MCF 10A (cell line): ENCODE measurements at regions of chr3 and their contacts with region 1.

Region 1: GRCh38 chr3:72887705-72888545 is at the start of gene GXYLT2:
- DNase-seq: peak; percentile 63
- H3K4me3 Mint-ChIP-seq: peak within 1 kb of the TSS; percentile 79
- H3K27ac Mint-ChIP-seq: no peak within 1 kb of the TSS
- H3K4me1 Mint-ChIP-seq: peaks cover 40% of the 10 kb centered on the region
- H3K27me3 Mint-ChIP-seq: no peaks in the 10 kb centered on the region
- CTCF ChIP-seq: no peak
- total RNA-seq, gene GXYLT2: 3.9 and 4.1 TPM in 2 replicates

Region 2: GRCh38 chr3:72907731-72908620 is 20.1 kb after region 1 on chr3:
- CTCF ChIA-PET with region 1: interaction called, 6 read pairs
- POLR2A ChIA-PET with region 1: interaction called, 13 read pairs
- intact Hi-C with region 1: no loop called
- DNase-seq: peak; percentile 82
- H3K4me3 Mint-ChIP-seq: no peak overlapping the region
- H3K27ac Mint-ChIP-seq: peak overlapping the region; percentile 29
- H3K4me1 Mint-ChIP-seq: peaks cover 18% of the 10 kb centered on the region
- H3K27me3 Mint-ChIP-seq: no peaks in the 10 kb centered on the region
- CTCF ChIP-seq: no peak